ENCODE measurements at regions of chr6 and their contacts with region 1.

Region 1: GRCh38 chr6:122628605-122629113 is 18.5 kb downstream of the PKIB start:
- DNase-seq: no peak
- H3K4me3 ChIP-seq: no peak overlapping the region
- H3K27ac ChIP-seq: no peak overlapping the region
- H3K4me1 ChIP-seq: no peaks in the 10 kb centered on the region
- H3K27me3 ChIP-seq: no peaks in the 10 kb centered on the region
- CTCF ChIP-seq: peak in 1 of 3 experiments; percentile 28; a peak in 1 of 4 replicates
- EP300 ChIP-seq: no peak
- POLR2A ChIP-seq: no peak
- RAD21 ChIP-seq: no peak; a peak in 1 of 4 replicates

Region 2: GRCh38 chr6:122614303-122614702 is 14.4 kb before region 1 on chr6:
- CTCF ChIA-PET with region 1: interaction called, 12 read pairs
- POLR2A ChIA-PET with region 1: no interaction called
- DNase-seq: no peak
- H3K4me3 ChIP-seq: no peak overlapping the region
- H3K27ac ChIP-seq: no peak overlapping the region
- H3K4me1 ChIP-seq: peaks cover 0 to 3% (median 0%) of the 10 kb centered on the region in 4 experiments; a peak in 4 of 7 replicates
- H3K27me3 ChIP-seq: peaks cover 0 to 25% (median 20%) of the 10 kb centered on the region in 4 experiments; a peak in 6 of 7 replicates
- CTCF ChIP-seq: no peak
- EP300 ChIP-seq: no peak
- POLR2A ChIP-seq: no peak
- RAD21 ChIP-seq: no peak

Region 3: DNA sequence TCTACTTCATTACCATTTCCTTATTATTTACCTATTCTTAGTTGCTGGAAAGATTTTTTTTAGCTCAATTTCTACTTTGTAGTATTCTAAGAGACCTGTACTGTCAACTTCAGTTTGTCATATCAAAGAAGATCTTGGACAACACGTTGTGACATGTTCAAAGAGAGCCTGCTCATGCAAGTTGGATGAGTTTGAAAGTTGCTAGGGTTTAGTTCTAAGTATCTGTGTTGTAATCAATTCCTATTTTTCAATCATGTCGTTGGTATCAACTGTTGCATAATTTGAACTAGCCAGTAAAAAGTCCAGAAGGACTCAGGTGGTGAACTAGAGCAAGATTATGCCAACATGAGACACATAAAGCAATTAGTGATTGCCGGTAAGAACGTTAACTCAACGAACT is 11.7 kb after region 1 on chr6:
- CTCF ChIA-PET with region 1: interaction called, 19 read pairs
- POLR2A ChIA-PET with region 1: interaction called, 3 read pairs
- DNase-seq: no peak
- H3K4me3 ChIP-seq: no peak overlapping the region
- H3K27ac ChIP-seq: no peak overlapping the region
- H3K4me1 ChIP-seq: no peaks in the 10 kb centered on the region
- H3K27me3 ChIP-seq: no peaks in the 10 kb centered on the region
- CTCF ChIP-seq: no peak
- EP300 ChIP-seq: no peak
- POLR2A ChIP-seq: no peak
- RAD21 ChIP-seq: no peak